Body of pancreas (tissue), 4 donors: ENCODE measurements at regions of chr15 and their contacts with region 1.

Region 1: DNA sequence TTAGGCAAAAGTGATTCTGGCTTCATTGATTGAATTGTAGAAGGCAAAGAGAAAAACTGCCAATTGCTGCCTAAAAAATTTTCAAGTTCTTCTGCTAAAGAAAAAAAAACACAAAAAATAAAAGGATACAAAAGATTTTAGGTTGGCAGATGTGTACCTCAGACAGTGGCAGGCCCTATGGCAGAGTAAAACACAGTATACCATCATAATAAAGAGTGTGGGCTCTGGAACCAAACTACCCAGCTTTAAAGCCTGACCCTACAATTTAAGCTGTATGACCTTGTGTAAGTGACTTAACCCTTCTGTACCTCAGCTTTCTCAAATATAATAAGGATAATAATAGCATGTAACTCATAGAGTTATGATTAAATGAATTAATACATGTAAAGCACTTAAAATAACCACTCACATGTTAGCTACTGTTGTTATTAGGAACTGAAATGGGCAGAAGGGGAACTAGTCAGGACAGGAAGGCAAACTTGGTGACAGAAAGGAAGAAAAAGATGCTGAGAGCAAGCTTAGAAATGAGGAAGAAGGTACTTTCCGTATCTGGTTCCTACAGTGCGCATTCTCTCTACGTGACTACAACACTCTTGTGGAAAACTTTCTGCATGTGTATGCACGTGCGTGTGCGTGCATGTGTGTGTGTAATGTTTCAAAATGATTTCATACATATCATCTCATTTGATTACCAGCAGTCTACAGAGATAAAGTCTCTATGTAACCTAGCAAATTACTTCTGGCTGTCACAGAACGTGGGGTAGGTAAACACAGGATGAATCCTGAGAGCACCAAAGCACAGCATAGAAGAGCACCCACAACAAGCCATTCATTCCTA is 13.6 kb upstream of the GATM start:
- DNase-seq: no peak
- ATAC-seq: no peak
- H3K4me3 ChIP-seq: no peak overlapping the region
- H3K27ac ChIP-seq: peak overlapping the region in 3 of 4 donors; percentile 35 to 94 (median 70)
- H3K4me1 ChIP-seq: peaks cover 96% of the 10 kb centered on the region
- H3K27me3 ChIP-seq: no peaks in the 10 kb centered on the region
- CTCF ChIP-seq: no peak
- POLR2A ChIP-seq: no peak

Region 2: GRCh38 chr15:45200001-45200798 is 191.8 kb before region 1 on chr15:
- intact Hi-C with region 1: loop called (anchors 5 kb)
- DNase-seq: peak; percentile 98 to 99 (median 98)
- ATAC-seq: peak; percentile 77
- H3K4me3 ChIP-seq: peak overlapping the region; percentile 9 to 22
- H3K27ac ChIP-seq: peak overlapping the region; percentile 93 to 100 (median 98)
- H3K4me1 ChIP-seq: peaks cover 16% of the 10 kb centered on the region
- H3K27me3 ChIP-seq: no peaks in the 10 kb centered on the region
- CTCF ChIP-seq: no peak
- POLR2A ChIP-seq: peak; percentile 85 to 97 (median 97)

Region 3: DNA sequence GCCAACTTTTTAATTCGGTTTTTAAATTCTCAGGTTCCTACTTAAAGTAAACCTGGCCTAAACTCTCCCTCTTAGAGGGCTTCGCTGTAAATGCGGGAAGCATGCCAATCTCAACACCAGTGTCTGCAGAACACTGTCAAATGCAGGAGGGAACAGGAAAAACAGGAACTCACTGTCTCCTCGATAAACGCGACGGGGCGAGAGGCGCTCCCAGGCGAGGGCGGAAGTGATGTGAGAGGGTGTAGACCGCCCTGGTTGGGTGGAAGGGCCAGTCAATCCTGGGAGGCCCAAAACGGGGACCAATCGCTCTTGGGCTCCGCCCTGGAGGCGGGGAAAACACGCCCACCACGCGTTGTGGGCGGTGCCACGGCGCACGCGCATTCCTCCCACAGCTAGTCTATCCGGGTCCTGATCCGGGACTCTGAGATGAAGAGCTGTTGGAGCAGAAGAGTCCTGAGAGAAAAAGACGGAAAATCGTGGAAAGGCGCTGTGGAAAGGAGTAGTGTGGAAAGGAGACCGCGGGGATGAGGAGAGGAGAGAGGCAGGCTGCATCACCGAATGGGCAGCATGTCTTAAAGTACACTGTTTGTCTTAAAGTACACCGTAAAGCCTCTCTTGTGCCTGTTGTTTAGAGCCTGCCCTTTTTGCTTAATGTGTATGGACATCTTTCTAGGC is 112.8 kb before region 1 on chr15:
- intact Hi-C with region 1: no loop called
- DNase-seq: peak; percentile 98 to 99 (median 99)
- ATAC-seq: peak; percentile 100
- H3K4me3 ChIP-seq: peak overlapping the region; percentile 23 to 72
- H3K27ac ChIP-seq: peak overlapping the region; percentile 78 to 86 (median 82)
- H3K4me1 ChIP-seq: peaks cover 14% of the 10 kb centered on the region
- H3K27me3 ChIP-seq: no peaks in the 10 kb centered on the region
- CTCF ChIP-seq: no peak
- POLR2A ChIP-seq: peak; percentile 73 to 91 (median 89)

Region 4: GRCh38 chr15:45307230-45307924 is 84.6 kb before region 1 on chr15:
- intact Hi-C with region 1: no loop called
- DNase-seq: peak in 1 of 4 donors; percentile 32
- ATAC-seq: peak; percentile 79
- H3K4me3 ChIP-seq: no peak overlapping the region
- H3K27ac ChIP-seq: peak overlapping the region in 3 of 4 donors; percentile 22 to 58 (median 45)
- H3K4me1 ChIP-seq: peaks cover 47% of the 10 kb centered on the region
- H3K27me3 ChIP-seq: no peaks in the 10 kb centered on the region
- CTCF ChIP-seq: peak; percentile 37 to 86 (median 79)
- POLR2A ChIP-seq: no peak